ENCODE measurements at regions of chr19 and their contacts with region 1.

Region 1: GRCh38 chr19:4638828-4639530 is at the start of gene TNFAIP8L1:
- DNase-seq: peak; percentile 92 to 93
- ATAC-seq: peak; percentile 60 to 80
- H3K4me3 ChIP-seq: peak within 1 kb of the TSS; percentile 66
- H3K27ac ChIP-seq: peak within 1 kb of the TSS; percentile 79 to 93
- H3K4me1 ChIP-seq: peaks cover 26% of the 10 kb centered on the region
- CTCF ChIP-seq: no peak
- EP300 ChIP-seq: no peak
- POLR2A ChIP-seq: no peak; the same call in 1 of the 2 replicates
- RAD21 ChIP-seq: no peak
- polyA plus RNA-seq, gene TNFAIP8L1: 3.2 TPM in 2 replicates

Region 2: GRCh38 chr19:4524808-4525562 is 114.0 kb before region 1 on chr19:
- CTCF ChIA-PET with region 1: interaction called, 16 read pairs
- POLR2A ChIA-PET with region 1: no interaction called
- DNase-seq: peak; percentile 51 to 63
- ATAC-seq: peak; percentile 82 to 84
- H3K4me3 ChIP-seq: no peak overlapping the region
- H3K27ac ChIP-seq: no peak overlapping the region
- H3K4me1 ChIP-seq: peaks cover 5% of the 10 kb centered on the region; the same call in 1 of the 3 replicates
- CTCF ChIP-seq: peak; percentile 54
- EP300 ChIP-seq: no peak
- POLR2A ChIP-seq: no peak
- RAD21 ChIP-seq: peak; percentile 34; a peak in 4 of 5 replicates

Region 3: GRCh38 chr19:4567584-4568071 is 71.4 kb before region 1 on chr19:
- CTCF ChIA-PET with region 1: interaction called, 118 read pairs
- POLR2A ChIA-PET with region 1: no interaction called
- DNase-seq: peak in 1 of 2 experiments; percentile 80
- ATAC-seq: peak; percentile 85 to 91
- H3K4me3 ChIP-seq: no peak overlapping the region
- H3K27ac ChIP-seq: peak overlapping the region in 1 of 2 experiments; percentile 58; a peak in 2 of 6 replicates
- H3K4me1 ChIP-seq: peaks cover 8% of the 10 kb centered on the region; the same call in 2 of the 3 replicates
- CTCF ChIP-seq: peak; percentile 58
- EP300 ChIP-seq: no peak
- POLR2A ChIP-seq: no peak
- RAD21 ChIP-seq: peak; percentile 27 to 48; a peak in 4 of 5 replicates

Region 4: GRCh38 chr19:4589579-4590410 is 49.2 kb before region 1 on chr19:
- CTCF ChIA-PET with region 1: interaction called, 97 read pairs
- POLR2A ChIA-PET with region 1: no interaction called
- DNase-seq: no peak
- ATAC-seq: peak; percentile 79 to 80; a peak in 5 of 6 replicates
- H3K4me3 ChIP-seq: no peak overlapping the region
- H3K27ac ChIP-seq: no peak overlapping the region
- H3K4me1 ChIP-seq: peaks cover 2% of the 10 kb centered on the region
- CTCF ChIP-seq: peak; percentile 38; the same call in 2 of the 3 replicates
- EP300 ChIP-seq: no peak
- POLR2A ChIP-seq: no peak
- RAD21 ChIP-seq: peak; percentile 12 to 21; a peak in 1 of 5 replicates

Region 5: GRCh38 chr19:4618019-4618418 is 21.0 kb before region 1 on chr19:
- CTCF ChIA-PET with region 1: interaction called, 39 read pairs
- POLR2A ChIA-PET with region 1: no interaction called
- DNase-seq: no peak
- ATAC-seq: 0 out of 6 replicates have a peak, but pooled peaks of 1 of the 2 experiments have one; percentile 32
- H3K4me3 ChIP-seq: no peak overlapping the region
- H3K27ac ChIP-seq: 0 out of 6 replicates have a peak overlapping the region, but pooled peaks of 1 of the 2 experiments have one; percentile 31
- H3K4me1 ChIP-seq: peaks cover 9% of the 10 kb centered on the region; the same call in 2 of the 3 replicates
- CTCF ChIP-seq: no peak
- EP300 ChIP-seq: no peak
- POLR2A ChIP-seq: no peak
- RAD21 ChIP-seq: no peak

Region 6: GRCh38 chr19:4654437-4655361 is 15.7 kb after region 1 on chr19:
- CTCF ChIA-PET with region 1: interaction called, 20 read pairs
- POLR2A ChIA-PET with region 1: no interaction called
- DNase-seq: no peak
- ATAC-seq: no peak; a peak in 1 of 6 replicates
- H3K4me3 ChIP-seq: no peak overlapping the region
- H3K27ac ChIP-seq: no peak overlapping the region
- H3K4me1 ChIP-seq: peaks cover 4% of the 10 kb centered on the region; the same call in 1 of the 3 replicates
- CTCF ChIP-seq: no peak
- EP300 ChIP-seq: no peak
- POLR2A ChIP-seq: no peak
- RAD21 ChIP-seq: no peak

Region 7: GRCh38 chr19:4754248-4754647 is 115.3 kb after region 1 on chr19:
- CTCF ChIA-PET with region 1: no interaction called
- POLR2A ChIA-PET with region 1: no interaction called
- DNase-seq: no peak
- ATAC-seq: no peak
- H3K4me3 ChIP-seq: no peak overlapping the region
- H3K27ac ChIP-seq: no peak overlapping the region
- H3K4me1 ChIP-seq: peaks cover under 1% of the 10 kb centered on the region; the same call in 1 of the 3 replicates
- CTCF ChIP-seq: no peak
- EP300 ChIP-seq: no peak
- POLR2A ChIP-seq: no peak
- RAD21 ChIP-seq: no peak

Measured in A549 (cell line).